IMR-90 (cell line): ENCODE measurements at regions of chr16 and their contacts with region 1.

Region 1: DNA sequence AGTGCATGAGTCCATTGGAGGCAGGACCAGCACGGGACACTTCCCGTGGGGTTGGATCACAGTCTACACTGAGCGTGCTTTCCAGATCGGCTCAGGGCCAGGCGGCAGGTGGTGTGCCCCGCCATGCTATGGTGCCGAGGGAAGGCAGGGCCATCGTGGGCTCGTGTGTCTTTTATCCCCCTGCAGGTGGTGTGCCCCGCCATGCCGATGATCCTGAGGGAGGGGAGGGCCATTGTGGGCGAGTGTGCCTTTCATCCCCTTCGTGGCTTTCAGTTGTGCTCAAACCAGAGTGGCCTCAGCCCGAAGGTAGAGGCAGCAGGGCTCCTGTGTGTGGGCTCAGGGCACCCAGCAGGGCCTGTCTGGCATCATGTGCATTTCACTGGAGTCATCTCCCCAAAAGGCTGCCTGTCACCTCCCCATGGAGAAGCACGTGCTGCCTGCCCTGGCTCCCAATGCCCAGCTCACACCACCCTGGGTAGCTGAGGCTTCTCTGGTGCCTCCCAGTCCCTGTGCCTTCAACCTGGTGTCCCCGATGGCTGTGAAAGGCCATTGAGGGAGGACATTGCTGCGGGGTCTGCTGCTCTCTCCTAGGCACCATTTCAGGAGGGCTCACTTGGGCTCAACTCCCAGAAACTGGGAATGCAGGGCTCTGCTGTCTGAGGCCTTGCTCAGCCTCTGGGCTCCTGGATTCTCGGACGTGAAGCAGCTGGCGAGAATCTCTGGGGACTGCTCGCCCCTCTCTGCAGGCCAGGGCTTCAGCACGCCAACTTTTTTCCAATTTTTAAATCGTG is 207.6 kb downstream of the NPIPB11 start:
- DNase-seq: no peak
- ATAC-seq: no peak
- H3K4me3 ChIP-seq: no peak overlapping the region
- H3K27ac ChIP-seq: peak overlapping the region; percentile 87
- H3K4me1 ChIP-seq: peaks cover 43% of the 10 kb centered on the region
- H3K27me3 ChIP-seq: no peaks in the 10 kb centered on the region
- CTCF ChIP-seq: no peak
- POLR2A ChIP-seq: no peak
- RAD21 ChIP-seq: no peak

Region 2: DNA sequence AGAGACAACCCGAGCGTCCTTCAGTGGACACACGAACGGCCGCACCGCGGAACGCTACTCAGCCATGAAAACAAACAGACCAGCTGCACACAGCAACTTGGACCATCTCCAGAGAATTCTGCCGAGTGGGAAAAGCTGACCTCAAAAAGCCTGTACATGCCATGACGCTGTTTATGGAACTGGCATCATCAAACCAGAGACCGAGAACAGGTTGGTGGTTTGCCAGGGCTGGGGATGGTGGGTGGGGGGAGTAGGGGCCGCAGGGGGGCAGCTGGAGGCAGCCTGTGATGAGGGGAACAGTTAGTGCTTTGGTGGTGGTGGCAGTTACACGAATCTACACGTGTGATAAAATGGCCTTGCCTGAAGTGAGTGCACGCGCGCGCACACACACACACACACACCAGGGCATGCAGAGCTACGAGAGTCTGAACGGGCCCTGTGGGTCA is 44.2 kb before region 1 on chr16:
- CTCF ChIA-PET with region 1: no interaction called
- POLR2A ChIA-PET with region 1: no interaction called
- dilution Hi-C with region 1: no loop called
- in situ Hi-C with region 1: no loop called
- intact Hi-C with region 1: loop called (anchors 5 kb)
- DNase-seq: peak; percentile 83
- ATAC-seq: peak; percentile 40; the same call in 1 of the 2 replicates
- H3K4me3 ChIP-seq: no peak overlapping the region
- H3K27ac ChIP-seq: peak overlapping the region; percentile 74; the same call in 1 of the 2 replicates
- H3K4me1 ChIP-seq: peaks cover 26% of the 10 kb centered on the region
- H3K27me3 ChIP-seq: no peaks in the 10 kb centered on the region
- CTCF ChIP-seq: no peak
- POLR2A ChIP-seq: no peak
- RAD21 ChIP-seq: no peak